ENCODE measurements at regions of chr15 and their contacts with region 1.

Region 1: GRCh38 chr15:90648137-90649070 is 68.7 kb upstream of the BLM start:
- DNase-seq: no peak
- H3K4me3 ChIP-seq: no peak overlapping the region
- H3K27me3 ChIP-seq: no peaks in the 10 kb centered on the region
- CTCF ChIP-seq: peak; percentile 88

Region 2: GRCh38 chr15:90553248-90553745 is 95.1 kb before region 1 on chr15:
- CTCF ChIA-PET with region 1: no interaction called
- POLR2A ChIA-PET with region 1: no interaction called
- DNase-seq: peak; percentile 75
- H3K4me3 ChIP-seq: no peak overlapping the region
- H3K27me3 ChIP-seq: no peaks in the 10 kb centered on the region
- CTCF ChIP-seq: no peak

Region 3: DNA sequence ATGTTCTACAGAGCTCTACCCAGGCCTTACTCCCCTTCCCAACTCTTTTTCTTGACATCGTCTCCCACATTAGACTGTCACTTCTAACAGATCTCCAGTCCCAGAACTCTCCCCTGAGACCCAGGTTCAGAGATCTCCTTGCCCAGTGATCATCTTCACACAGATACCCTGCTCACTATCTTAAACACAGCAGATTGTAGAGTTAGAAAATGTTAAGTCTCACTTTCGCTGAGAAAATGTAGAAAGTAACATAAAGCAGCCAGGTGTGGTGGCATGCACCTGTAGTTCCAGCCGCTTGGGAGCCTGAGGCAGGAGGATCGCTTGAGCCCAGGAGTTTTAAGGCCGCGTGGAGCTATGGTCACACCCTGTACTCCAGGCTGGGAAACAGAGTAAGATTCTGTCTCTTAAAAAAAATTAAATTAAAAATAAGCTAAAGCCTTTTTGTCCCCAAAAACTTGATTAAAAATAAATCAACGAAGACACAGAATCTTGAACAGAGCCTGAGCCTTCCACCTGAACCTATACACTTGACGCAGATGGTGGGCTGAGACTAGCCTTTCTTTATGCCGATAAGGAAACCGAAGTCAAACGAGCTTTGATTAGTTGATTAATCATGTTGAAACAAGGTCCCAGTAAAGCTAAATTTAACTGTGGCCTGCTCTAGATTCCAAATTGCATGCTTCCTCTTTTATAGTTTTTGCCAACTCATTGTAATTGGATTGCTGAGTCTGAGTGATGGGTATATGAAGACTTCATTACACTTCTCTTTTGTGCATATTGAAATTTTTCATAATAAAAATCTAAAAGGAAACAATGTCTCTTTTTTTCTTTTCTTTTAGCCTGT is 37.4 kb after region 1 on chr15:
- CTCF ChIA-PET with region 1: interaction called, 17 read pairs
- POLR2A ChIA-PET with region 1: no interaction called
- DNase-seq: no peak
- H3K4me3 ChIP-seq: no peak overlapping the region
- H3K27me3 ChIP-seq: no peaks in the 10 kb centered on the region
- CTCF ChIP-seq: no peak

Region 4: DNA sequence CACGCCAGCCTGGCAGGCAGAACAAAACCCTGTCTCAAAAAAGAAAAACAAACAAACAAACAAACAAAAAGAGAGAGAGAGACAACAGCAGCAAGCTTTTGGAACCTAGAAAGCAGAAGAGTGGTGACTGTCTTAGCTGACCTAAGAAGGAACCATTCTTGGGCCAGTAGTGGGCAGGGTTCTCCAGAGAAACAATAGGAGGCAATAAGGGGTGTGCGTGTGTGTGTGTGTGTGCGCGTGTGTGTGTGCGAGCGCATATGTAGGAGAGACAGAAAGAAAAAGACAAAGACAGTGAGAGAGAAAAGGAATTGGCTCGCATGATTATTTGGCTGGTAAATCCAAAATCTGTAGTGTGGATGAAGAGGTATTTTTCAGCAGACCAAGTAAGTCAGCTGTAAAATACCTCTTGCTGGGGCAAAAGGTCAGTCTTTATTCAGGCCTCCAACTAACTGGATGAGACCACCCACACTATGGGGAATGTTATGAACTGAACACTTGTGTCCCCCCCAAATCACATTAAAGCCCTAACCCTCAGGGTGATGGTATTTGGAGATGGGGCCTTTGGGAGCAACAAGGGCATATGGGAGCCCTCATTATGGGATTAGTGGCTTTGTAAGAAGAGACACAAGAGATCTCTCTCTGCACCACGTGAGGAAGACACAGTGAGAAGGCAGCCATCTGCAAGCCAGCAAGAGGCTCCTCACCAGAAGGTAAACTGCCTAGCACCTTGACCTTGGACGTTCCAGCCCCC is 53.7 kb after region 1 on chr15:
- CTCF ChIA-PET with region 1: interaction called, 10 read pairs
- POLR2A ChIA-PET with region 1: no interaction called
- DNase-seq: no peak
- H3K4me3 ChIP-seq: no peak overlapping the region
- H3K27me3 ChIP-seq: no peaks in the 10 kb centered on the region
- CTCF ChIP-seq: no peak